GM10248 (cell line): ENCODE measurements at regions of chr2 and their contacts with region 1.

Region 1: GRCh38 chr2:237572021-237572741 is 5.8 kb downstream of the PRLH start:
- DNase-seq: peak; percentile 95
- CTCF ChIP-seq: peak; percentile 90

Region 2: DNA sequence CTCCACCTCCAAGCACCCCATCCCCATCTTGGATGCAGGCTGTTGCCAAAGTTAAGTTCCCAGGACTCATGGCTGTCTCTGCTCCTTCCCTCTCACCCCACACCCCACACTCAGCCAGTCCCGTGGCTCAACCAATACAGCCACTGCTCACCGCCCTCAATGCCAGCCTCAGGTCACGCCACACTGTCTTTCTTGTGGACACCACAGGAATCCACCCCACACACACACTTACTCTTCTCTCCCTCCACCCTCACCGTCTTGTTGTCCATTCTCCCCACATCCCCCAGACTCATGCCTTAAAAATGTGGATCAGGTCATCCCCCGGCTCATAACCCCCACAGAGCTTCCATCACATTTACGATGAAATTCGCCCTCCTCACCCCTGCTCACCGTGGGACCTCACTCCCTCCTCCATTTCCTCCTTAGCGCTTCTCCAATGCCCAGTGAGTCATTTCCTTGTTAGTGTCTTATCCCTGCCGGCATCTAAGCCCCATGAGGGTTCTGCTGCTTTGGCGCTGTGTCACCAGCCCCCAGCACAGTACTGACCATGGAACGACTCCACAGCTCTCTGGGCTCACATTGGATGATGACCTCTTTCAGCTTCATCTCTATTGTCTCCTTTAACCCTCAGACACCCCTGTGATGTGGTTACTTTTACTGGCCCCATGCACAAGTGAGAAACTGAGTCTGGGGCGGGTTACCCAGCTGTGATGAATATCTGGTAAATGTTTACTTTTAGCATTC is 71.3 kb before region 1 on chr2:
- CTCF ChIA-PET with region 1: interaction called, 317 read pairs
- POLR2A ChIA-PET with region 1: no interaction called
- DNase-seq: no peak
- CTCF ChIP-seq: no peak

Region 3: DNA sequence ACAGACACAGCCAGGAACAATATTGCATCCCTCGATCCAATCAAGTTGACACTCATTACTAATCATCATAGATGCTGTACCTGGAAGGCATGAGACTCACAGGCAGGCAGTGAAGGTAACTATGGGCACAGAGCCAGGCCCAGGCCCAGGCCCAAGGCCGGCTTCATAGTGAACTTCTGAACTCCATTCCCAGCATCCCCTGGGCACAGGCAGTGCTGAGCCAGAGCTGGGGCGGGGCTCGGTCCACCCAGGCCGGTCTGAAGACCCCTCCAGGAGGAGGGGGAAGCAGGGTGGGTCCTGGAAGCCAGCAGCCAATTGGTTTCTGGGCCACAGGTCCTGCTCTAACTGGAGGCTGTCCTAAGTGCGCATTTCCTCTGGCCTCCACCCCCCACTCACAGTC is 47.5 kb before region 1 on chr2:
- CTCF ChIA-PET with region 1: interaction called, 17 read pairs
- POLR2A ChIA-PET with region 1: no interaction called
- DNase-seq: no peak
- CTCF ChIP-seq: no peak

Region 4: GRCh38 chr2:237540823-237541222 is 31.4 kb before region 1 on chr2:
- CTCF ChIA-PET with region 1: interaction called, 19 read pairs
- POLR2A ChIA-PET with region 1: no interaction called
- DNase-seq: no peak
- CTCF ChIP-seq: no peak

Region 5: DNA sequence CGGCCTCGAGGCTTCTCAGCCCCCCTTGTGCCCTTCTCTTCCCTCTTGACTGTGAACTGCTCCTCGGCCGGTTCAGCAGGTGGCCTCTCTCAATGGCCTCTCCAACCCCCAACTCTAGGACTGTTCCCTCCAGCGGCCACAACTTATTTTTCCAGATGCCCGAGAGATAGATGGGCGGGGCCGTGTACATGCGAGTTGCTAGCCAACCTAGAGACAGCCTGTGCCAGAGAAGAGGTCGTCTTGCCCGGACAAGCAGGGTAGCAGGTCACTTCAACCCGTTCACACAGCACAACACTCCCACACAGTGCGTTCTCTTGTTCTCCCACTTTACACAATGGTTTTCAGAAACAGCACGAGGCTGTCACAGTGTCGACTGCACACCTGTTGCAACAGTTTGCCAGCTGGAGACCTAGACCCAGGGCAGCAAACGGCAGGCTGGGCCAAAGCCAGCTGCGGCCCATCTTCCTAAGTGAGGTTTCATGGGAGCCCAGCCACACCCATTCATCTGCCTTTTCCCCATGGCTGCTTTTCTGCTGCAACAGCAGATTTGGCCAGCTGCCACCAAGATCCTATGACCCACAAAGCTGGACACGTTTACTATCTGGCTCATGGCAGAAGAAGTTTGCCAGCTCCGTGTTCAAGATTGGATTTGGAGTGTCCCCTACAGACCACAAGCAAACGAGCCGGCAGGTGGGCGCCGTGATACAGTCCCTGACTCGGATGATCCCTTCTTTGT is 13.1 kb before region 1 on chr2:
- CTCF ChIA-PET with region 1: interaction called, 34 read pairs
- POLR2A ChIA-PET with region 1: no interaction called
- DNase-seq: no peak
- CTCF ChIP-seq: no peak

Region 6: GRCh38 chr2:237660380-237660904 is 88.3 kb after region 1 on chr2:
- CTCF ChIA-PET with region 1: no interaction called
- POLR2A ChIA-PET with region 1: no interaction called
- DNase-seq: no peak
- CTCF ChIP-seq: no peak